ENCODE measurements at regions of chr20 and their contacts with region 1.

Region 1: DNA sequence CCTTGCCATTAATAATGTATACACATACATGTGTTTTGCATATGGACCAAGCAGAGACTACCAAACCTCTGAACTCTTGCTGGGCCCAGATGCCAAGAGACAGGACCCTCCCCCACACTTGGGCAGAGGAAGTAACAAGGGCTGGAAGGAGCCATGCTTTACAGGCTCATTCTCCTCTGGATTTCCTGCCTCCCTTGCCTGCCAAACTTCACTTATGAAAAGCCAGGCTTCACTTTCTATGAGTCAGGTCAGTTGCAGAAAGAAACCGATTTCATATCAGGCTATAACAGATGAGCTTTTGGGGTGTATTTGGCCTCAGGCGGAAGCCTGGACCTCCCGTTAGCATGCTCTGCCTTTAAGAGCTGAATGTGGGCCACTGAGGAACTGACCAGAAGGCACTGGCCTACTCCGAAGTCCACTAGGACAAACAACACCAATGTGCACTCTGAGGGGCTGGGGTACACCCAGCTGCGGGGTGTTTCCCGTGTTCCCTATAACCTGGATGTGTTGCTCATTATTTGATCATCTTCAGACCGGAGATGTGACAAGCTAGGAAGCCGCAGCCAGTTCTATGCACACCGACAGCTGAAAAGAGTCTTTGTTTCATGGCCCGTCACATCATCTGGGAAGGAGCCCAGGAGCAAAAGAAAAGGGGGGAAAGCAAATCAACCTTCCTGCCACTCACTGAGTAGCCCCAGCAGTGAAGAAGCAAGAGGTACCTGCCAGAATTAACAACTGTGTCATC is 28.5 kb downstream of the HAO1 start:
- DNase-seq: peak; percentile 83
- ATAC-seq: peak; percentile 82
- H3K4me3 ChIP-seq: peak overlapping the region; percentile 16; the same call in 1 of the 2 replicates
- H3K27ac ChIP-seq: peak overlapping the region; percentile 97
- H3K4me1 ChIP-seq: peaks cover 37% of the 10 kb centered on the region
- H3K27me3 ChIP-seq: no peaks in the 10 kb centered on the region
- CTCF ChIP-seq: no peak

Region 2: DNA sequence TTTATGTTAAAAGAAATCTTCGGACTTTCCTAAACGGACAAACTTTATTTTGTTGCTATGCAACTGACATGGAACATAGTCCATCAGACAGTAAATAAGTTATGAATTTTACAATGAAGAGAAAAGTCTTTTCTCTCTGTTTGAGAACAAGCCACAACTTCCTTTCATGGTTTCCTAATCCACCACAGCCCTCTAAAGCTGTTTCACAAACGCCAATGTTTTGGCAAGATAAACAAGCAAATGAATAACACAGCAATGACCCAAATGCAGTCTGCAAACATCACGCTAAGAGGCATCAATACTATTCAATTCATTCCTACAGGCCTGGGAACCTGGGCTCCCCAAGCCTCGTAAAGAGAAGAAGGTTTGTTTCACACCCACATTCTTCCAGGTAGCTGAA is 31.9 kb before region 1 on chr20:
- CTCF ChIA-PET with region 1: no interaction called
- POLR2A ChIA-PET with region 1: no interaction called
- intact Hi-C with region 1: loop called (anchors 1 kb)
- DNase-seq: peak; percentile 90
- ATAC-seq: peak; percentile 88
- H3K4me3 ChIP-seq: peak overlapping the region; percentile 30; the same call in 1 of the 2 replicates
- H3K27ac ChIP-seq: peak overlapping the region; percentile 89
- H3K4me1 ChIP-seq: peaks cover 17% of the 10 kb centered on the region
- H3K27me3 ChIP-seq: no peaks in the 10 kb centered on the region
- CTCF ChIP-seq: no peak

Region 3: GRCh38 chr20:7897781-7898364 is 13.9 kb before region 1 on chr20:
- CTCF ChIA-PET with region 1: no interaction called
- POLR2A ChIA-PET with region 1: interaction called, 11 read pairs
- intact Hi-C with region 1: no loop called
- DNase-seq: no peak
- ATAC-seq: no peak
- H3K4me3 ChIP-seq: no peak overlapping the region
- H3K27ac ChIP-seq: no peak overlapping the region
- H3K4me1 ChIP-seq: peaks cover 16% of the 10 kb centered on the region
- H3K27me3 ChIP-seq: no peaks in the 10 kb centered on the region
- CTCF ChIP-seq: no peak

Measured in PC-3 (cell line).